Right ventricle myocardium inferior (tissue), 1 donor: ENCODE measurements at regions of chr2 and their contacts with region 1.

Region 1: GRCh38 chr2:224284134-224284946 is 117.6 kb downstream of the FAM124B start:
- DNase-seq: no peak
- ATAC-seq: no peak

Region 2: GRCh38 chr2:223970343-223971128 is 313.8 kb before region 1 on chr2:
- intact Hi-C with region 1: loop called (anchors 1 kb)
- DNase-seq: no peak
- ATAC-seq: no peak

Region 3: GRCh38 chr2:223993621-223994232 is 290.6 kb before region 1 on chr2:
- intact Hi-C with region 1: loop called (anchors 1 kb)
- DNase-seq: no peak
- ATAC-seq: peak; percentile 63